ENCODE measurements at regions of chr2 and their contacts with region 1.

Region 1: DNA sequence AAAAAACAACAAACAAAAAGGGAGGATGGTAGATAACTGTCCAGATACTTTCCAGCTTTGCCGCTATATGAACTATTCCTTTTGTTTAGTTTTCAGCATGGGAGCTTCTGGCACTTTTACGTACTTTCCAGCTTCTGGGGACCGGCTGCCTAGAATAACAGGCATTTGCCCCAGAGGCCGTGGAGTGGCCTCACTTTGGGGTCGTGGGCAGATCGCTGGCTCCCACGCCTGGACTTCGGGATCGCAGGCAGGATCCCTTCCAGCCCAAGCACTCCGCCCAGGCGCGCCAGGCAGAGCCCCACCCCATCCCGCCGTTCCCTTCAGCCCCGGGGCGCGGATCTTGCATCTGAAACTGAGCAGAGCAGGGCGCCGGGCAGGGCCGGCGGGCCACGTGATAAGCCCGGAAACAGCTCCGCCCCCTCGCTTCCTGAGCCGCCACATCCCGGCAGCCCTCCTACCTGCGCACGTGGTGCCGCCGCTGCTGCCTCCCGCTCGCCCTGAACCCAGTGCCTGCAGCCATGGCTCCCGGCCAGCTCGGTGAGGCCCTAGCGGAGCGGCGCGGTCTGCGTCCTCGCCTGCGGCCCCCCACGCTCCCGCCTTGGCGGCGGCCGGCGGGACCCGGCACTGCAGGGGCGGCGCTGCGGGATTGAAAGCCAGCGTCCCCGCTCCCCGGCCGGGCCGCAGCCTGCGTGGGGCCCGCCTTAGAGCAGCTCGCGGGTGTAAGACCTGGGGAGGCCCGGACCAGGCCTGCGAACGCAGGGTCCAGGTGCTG is at the start of gene ATIC:
- DNase-seq: peak; percentile 97
- H3K4me3 ChIP-seq: peak within 1 kb of the TSS; percentile 65 to 86 (median 69)
- H3K27ac ChIP-seq: peak within 1 kb of the TSS; percentile 81 to 91 (median 86)
- H3K4me1 ChIP-seq: peaks cover 0 to 20% (median 13%) of the 10 kb centered on the region in 4 donors
- H3K27me3 ChIP-seq: no peaks in the 10 kb centered on the region
- CTCF ChIP-seq: no peak
- EP300 ChIP-seq: peak in 1 of 4 donors; percentile 45
- POLR2A ChIP-seq: no peak
- total RNA-seq, gene ATIC: 27.0 to 42.6 (median 36.7) TPM

Region 2: GRCh38 chr2:215410932-215411285 is 99.1 kb after region 1 on chr2:
- intact Hi-C with region 1: no loop called
- DNase-seq: no peak
- H3K4me3 ChIP-seq: no peak overlapping the region
- H3K27ac ChIP-seq: peak overlapping the region; percentile 23 to 73 (median 68)
- H3K4me1 ChIP-seq: peaks cover 0 to 26% (median 11%) of the 10 kb centered on the region in 4 donors
- H3K27me3 ChIP-seq: no peaks in the 10 kb centered on the region
- CTCF ChIP-seq: no peak
- EP300 ChIP-seq: no peak
- POLR2A ChIP-seq: no peak

Region 3: GRCh38 chr2:215931256-215931903 is 619.6 kb after region 1 on chr2:
- intact Hi-C with region 1: loop called (anchors 10 kb)
- DNase-seq: peak; percentile 80
- H3K4me3 ChIP-seq: no peak overlapping the region
- H3K27ac ChIP-seq: no peak overlapping the region
- H3K4me1 ChIP-seq: no peaks in the 10 kb centered on the region
- H3K27me3 ChIP-seq: no peaks in the 10 kb centered on the region
- CTCF ChIP-seq: peak; percentile 72 to 95 (median 84)
- EP300 ChIP-seq: no peak
- POLR2A ChIP-seq: no peak

Measured in sigmoid colon (tissue), 7 donors.